Sciatic nerve (tissue), 2 donors: ENCODE measurements at regions of chr14 and their contacts with region 1.

Region 1: GRCh38 chr14:92951912-92952471 is 29.0 kb downstream of the CHGA start:
- DNase-seq: peak; percentile 90
- ATAC-seq: peak; percentile 91

Region 2: DNA sequence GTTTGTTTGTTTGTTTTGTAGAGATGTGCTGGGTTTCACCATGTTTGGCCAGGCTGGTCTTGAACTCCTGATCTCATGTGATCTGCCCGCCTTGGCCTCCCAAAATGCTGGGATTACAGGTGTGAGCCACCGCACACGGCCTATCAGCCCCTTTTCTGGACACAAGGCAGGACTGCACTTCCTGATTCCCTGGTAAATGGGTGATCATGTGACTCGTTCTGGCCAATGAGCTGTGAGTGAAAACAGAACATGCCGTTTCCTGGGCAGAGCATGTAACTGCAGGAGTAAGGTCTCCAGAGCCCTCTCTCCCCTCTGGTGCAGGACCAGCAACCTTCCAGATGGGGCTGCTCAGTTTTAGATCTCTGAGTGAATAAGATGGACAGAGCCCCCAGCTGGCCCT is 71.0 kb after region 1 on chr14:
- intact Hi-C with region 1: no loop called
- DNase-seq: no peak
- ATAC-seq: no peak

Region 3: GRCh38 chr14:93132470-93133065 is 180.6 kb after region 1 on chr14:
- intact Hi-C with region 1: loop called (anchors 5 kb)
- DNase-seq: peak; percentile 69
- ATAC-seq: peak; percentile 90

Region 4: GRCh38 chr14:94571950-94572349 is 1620.0 kb after region 1 on chr14:
- intact Hi-C with region 1: no loop called
- DNase-seq: no peak
- ATAC-seq: peak; percentile 39